ENCODE measurements at regions of chr6 and their contacts with region 1.

Region 1: GRCh38 chr6:52253494-52253893 is 9.2 kb upstream of the IL17F start:
- DNase-seq: peak; percentile 33
- H3K4me3 Mint-ChIP-seq: no peak overlapping the region
- H3K27ac Mint-ChIP-seq: no peak overlapping the region
- H3K4me1 Mint-ChIP-seq: peaks cover 38% of the 10 kb centered on the region
- H3K27me3 Mint-ChIP-seq: peaks cover 29% of the 10 kb centered on the region

Region 2: DNA sequence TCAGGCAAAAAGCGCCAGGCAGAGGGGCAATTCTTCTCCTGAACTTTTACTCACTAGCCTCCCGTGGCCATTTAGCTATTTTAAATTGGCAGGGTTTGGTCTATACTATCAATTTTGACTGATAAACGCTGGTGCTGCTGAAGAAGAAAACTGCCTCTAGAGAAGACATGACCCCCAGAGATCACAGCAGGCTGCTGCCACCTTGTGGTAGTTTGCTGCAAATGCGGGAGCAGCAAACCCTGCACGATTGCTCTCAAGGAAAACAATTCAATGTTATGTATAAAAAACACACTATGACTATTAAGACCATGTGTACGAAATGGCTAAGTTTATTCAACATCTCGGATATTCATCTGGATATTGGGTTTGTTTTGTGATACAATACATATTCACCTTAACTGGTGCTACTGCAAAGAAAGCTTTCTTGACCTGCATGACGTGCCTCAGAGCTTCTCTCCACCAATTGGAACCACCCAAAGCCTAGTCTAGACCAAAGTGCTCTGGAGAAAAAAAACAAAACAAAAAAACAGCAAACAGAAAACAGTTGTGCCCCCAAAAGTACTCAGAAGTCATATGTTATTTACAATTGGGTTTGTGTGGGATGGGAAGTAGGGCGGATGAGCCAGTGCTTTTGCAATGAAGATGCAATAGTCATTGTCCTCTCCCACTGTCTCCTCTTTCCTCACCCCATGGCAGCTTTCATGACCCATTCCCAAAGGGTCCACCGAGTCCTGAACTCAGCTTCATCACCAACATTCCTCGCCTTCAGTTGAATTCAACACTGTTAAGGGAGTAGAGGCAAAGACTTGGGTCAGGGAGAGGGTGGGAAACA is 10.4 kb after region 1 on chr6:
- CTCF ChIA-PET with region 1: interaction called, 10 read pairs
- POLR2A ChIA-PET with region 1: no interaction called
- DNase-seq: peak; percentile 80
- H3K4me3 Mint-ChIP-seq: no peak overlapping the region
- H3K27ac Mint-ChIP-seq: peak overlapping the region; percentile 47
- H3K4me1 Mint-ChIP-seq: peaks cover 23% of the 10 kb centered on the region
- H3K27me3 Mint-ChIP-seq: no peaks in the 10 kb centered on the region

Region 3: DNA sequence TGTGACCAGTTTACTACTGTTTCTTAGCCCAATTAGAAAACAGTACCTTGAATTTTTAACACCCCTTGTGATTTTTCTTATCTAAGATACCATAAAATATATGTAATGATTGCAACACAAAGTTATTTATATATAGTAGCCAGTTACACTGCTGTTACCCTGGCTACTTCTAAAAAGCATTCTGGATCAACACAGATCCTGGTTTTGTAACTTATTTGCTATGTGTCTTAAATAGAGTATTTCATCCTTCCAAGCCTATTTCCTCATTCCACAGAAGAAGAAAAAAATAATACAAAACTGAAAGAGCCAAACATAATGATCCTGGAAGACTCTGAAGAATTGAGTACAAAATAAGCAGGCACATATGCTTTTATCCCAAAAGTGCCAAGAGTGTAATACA is 760.6 kb after region 1 on chr6:
- CTCF ChIA-PET with region 1: no interaction called
- POLR2A ChIA-PET with region 1: no interaction called
- DNase-seq: no peak
- H3K4me3 Mint-ChIP-seq: no peak overlapping the region
- H3K27ac Mint-ChIP-seq: no peak overlapping the region
- H3K4me1 Mint-ChIP-seq: no peaks in the 10 kb centered on the region
- H3K27me3 Mint-ChIP-seq: no peaks in the 10 kb centered on the region

Measured in activated CD4-positive, alpha-beta T cell treated with anti-CD3 and anti-CD28 coated beads, Interleukin-2, amount 10 ng/mL, durations not matched to agents 7 days and 5 days (primary cell).